Aorta (tissue), 5 donors: ENCODE measurements at regions of chr10 and their contacts with region 1.

Region 1: GRCh38 chr10:22443175-22443901 is 98.0 kb downstream of the SPAG6 start:
- DNase-seq: no peak
- ATAC-seq: no peak
- H3K4me3 ChIP-seq: no peak overlapping the region
- H3K27ac ChIP-seq: no peak overlapping the region
- H3K4me1 ChIP-seq: peaks cover 0 to 2% of the 10 kb centered on the region in 2 donors
- H3K27me3 ChIP-seq: no peaks in the 10 kb centered on the region

Region 2: DNA sequence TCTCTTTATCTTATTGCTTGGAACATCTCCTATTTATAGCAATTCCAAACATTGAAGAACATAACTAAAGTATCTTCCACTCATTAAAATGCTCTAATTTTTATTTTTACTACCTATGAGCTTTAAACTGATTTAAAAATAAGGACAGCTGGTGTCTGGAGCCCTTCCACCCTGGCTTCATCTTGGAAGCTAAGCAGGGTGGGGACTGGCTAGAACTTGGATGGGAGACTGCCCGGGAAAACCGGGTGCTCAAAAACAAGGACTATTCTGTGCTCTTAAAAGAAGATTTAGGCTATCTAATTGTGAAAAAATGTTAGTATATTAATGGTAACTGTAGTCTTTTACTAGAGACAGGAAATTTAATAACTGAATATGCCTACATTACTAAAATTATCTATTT is 553.8 kb after region 1 on chr10:
- intact Hi-C with region 1: loop called in 1 of 2 experiments (anchors 10 kb)
- DNase-seq: no peak
- ATAC-seq: no peak
- H3K4me3 ChIP-seq: no peak overlapping the region
- H3K27ac ChIP-seq: no peak overlapping the region
- H3K4me1 ChIP-seq: no peaks in the 10 kb centered on the region
- H3K27me3 ChIP-seq: peaks cover 0 to 1% of the 10 kb centered on the region in 2 donors